Astrocyte of the cerebellum (primary cell): ENCODE measurements at regions of chr3 and their contacts with region 1.

Region 1: DNA sequence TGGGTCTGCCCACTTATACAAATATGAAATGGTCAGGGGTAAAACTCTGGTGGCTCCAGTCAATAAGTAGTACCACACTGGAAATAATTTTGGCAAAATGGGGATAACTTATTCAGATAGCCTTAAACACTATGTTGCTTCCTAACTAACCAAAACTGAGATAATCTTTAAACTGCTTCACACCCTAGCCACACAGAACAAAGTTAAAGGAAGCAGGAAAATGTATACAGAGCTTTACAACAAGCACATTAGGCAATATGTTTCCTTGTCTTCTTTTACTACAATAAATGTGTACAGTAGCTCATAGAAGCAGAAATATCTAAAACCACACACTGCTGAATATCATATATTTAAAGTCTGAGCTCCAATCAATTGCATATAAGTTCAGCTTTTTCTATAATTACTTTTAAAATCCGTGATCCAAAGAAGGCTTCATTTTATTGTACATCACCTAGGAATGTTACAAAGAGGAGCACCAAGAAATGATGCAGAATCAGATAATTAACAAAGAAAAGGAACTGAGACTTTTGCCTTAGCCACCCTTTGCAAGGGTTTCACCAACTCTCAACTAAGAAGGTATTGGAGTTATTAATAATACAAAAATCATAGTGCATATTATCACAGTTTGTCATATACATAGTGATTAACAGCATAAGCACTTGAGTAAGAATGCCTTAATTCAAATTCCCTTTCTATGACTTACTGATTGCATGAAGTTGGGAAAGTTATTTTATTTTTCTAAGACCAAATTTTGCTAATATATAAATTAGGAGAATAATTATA is 9.2 kb upstream of the SSR3 start:
- DNase-seq: no peak
- H3K4me3 ChIP-seq: no peak overlapping the region
- CTCF ChIP-seq: no peak

Region 2: GRCh38 chr3:156664831-156665178 is 100.7 kb after region 1 on chr3:
- in situ Hi-C with region 1: loop called (anchors 5 kb)
- DNase-seq: no peak
- H3K4me3 ChIP-seq: no peak overlapping the region
- CTCF ChIP-seq: no peak